GM13976 (cell line): ENCODE measurements at regions of chr6 and their contacts with region 1.

Region 1: GRCh38 chr6:111259089-111259831 is 172.0 kb downstream of the SLC16A10 start:
- DNase-seq: peak; percentile 99
- CTCF ChIP-seq: peak; percentile 94

Region 2: DNA sequence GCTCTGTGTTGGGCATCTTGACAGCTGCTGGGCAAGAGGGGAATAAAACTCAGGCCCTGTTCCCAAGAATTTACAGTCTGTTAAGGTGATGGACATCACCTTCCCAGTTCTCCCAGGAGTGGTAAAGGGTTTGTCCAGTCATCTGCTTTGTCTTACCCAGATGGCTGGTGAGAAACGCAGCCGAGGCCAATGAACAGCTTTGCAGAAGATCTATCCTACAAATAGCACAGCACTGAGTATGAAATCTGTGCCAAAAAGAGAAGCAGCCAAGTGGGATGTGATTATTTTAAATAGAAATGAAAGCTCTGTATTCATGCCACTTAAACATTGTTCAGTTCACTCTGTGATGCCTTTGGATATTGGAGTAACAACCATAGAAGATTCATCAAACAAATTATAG is 650.2 kb before region 1 on chr6:
- in situ Hi-C with region 1: no loop called
- DNase-seq: no peak
- CTCF ChIP-seq: no peak

Region 3: GRCh38 chr6:111478749-111479148 is 219.5 kb after region 1 on chr6:
- in situ Hi-C with region 1: loop called (anchors 10 kb)
- DNase-seq: peak; percentile 49
- CTCF ChIP-seq: peak; percentile 46

Region 4: DNA sequence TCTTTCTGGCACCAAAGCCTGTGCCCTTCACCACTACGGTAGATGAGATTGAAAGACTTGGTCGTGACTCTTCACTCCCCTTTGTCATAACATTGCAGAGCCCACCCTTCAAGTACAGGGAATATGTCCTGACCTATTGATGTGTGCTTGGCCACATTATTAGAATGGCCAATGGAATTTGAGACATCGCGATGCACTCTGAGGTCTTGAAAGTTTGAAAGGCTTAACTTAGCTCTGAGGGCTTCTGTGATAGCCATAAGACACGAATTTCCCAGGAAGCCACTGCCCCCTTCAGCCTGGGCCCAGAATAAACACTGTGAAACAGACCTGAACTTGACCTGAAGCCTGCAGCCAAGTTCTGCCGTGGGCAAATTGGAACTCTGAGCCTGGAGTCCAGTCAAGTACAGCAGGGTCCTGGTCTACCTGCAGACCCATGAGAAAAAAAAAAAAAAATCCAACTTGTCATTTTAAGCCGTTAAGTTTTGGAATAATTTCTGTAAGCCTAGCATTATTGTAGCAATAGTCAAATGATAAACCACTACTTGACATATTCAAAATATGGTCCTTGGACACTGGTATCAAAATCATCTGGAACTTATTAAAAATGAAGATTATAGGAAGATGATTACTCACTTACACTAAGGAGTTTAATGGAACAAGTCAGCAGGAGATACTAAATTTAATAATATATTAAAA is 383.4 kb after region 1 on chr6:
- in situ Hi-C with region 1: loop called (anchors 10 kb)
- DNase-seq: peak; percentile 73
- CTCF ChIP-seq: peak; percentile 68

Region 5: DNA sequence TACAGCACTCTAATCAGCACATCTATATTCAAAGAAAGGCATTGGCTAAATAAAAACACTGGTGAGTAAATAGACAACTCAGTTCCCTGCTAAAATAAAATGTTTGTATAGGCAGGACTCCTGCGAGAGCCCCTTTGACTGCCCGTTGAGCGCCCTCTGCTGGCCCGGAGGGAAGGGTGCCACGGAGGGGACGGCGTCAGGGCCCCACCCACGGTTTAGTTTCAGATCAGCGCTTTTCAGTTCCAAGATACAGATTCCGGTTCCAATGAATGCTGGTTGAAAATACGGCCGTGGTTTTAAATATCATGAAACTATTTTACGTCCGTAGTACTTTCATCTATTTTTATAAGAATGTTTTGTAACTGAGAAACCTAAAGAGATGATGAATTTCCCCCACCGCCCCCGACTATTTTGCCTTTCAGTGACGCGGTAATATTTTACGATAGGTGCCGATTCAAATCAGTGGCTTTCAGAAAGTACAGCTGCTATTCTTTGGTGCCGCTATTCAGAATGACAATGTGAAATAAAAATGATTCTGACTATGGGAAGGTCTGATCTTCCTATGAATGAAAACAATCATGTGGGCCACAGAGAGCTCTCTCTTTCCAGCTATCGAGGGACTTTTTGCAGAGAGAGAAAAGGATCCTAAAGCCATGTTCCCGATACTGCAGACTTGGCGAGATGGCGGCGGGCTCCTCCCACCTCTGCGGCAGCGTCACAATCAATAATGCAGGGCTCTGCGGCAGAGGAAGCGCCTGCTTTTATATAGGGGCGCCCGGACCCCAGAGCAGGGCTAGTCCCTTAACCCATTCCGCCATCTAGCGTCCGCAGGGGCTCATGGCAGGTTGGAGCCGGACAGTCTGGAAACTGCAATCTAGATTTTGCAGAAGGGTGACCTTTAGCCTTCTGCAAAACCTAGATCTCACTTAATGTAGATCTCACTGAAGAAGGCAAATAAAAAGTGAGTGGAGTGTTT is 784.1 kb after region 1 on chr6:
- in situ Hi-C with region 1: loop called (anchors 25 kb)
- DNase-seq: peak; percentile 87
- CTCF ChIP-seq: peak; percentile 95